ENCODE measurements at regions of chr5 and their contacts with region 1.

Region 1: DNA sequence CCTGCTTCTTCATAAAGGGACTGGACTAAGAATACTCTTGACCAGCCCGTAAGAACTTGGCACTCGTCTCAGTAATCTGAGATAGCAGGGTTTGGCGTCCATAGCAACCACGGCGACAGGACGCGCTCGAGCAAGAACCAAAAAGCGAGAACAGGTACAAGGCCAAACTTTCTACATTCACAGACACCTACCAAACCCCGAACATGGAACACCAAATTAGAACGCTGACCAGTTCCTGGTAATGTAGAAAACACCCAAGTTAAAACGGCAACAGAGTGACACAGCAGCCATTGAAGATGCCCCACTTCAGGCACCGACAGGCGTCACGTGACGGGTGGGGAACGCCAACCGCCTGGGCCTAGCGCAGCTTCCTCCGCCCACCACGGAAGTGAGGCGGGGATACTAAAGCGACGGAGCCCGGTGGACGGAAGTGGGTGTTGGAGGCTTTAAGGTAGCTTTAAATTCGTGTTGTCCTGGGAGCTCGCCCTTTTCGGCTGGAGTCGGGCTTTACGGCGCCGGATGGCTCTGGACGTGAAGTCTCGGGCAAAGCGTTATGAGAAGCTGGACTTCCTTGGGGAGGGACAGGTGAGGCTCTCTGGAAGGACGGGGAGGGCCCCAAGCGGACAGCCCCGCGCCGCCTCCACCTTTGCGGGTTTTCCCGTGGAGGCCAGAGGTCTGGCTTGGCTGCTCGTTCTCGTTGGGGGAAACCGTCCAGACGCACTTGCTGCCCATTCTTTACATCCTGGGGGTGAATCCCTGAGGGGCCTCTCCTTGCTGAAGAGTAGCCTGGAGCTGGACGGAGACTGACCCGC is at the start of gene CDK7:
- DNase-seq: peak; percentile 94 to 95
- ATAC-seq: peak; percentile 98 to 99
- H3K4me3 ChIP-seq: peak within 1 kb of the TSS; percentile 68 to 92 (median 76)
- H3K27ac ChIP-seq: peak within 1 kb of the TSS; percentile 75 to 94 (median 86)
- H3K4me1 ChIP-seq: peaks cover 21 to 25% of the 10 kb centered on the region in 2 donors
- H3K27me3 ChIP-seq: no peaks in the 10 kb centered on the region
- CTCF ChIP-seq: peak in 2 of 5 experiments; percentile 12
- POLR2A ChIP-seq: peak; percentile 57 to 58
- total RNA-seq, gene CDK7: 23.4 to 31.6 (median 28.0) TPM

Region 2: DNA sequence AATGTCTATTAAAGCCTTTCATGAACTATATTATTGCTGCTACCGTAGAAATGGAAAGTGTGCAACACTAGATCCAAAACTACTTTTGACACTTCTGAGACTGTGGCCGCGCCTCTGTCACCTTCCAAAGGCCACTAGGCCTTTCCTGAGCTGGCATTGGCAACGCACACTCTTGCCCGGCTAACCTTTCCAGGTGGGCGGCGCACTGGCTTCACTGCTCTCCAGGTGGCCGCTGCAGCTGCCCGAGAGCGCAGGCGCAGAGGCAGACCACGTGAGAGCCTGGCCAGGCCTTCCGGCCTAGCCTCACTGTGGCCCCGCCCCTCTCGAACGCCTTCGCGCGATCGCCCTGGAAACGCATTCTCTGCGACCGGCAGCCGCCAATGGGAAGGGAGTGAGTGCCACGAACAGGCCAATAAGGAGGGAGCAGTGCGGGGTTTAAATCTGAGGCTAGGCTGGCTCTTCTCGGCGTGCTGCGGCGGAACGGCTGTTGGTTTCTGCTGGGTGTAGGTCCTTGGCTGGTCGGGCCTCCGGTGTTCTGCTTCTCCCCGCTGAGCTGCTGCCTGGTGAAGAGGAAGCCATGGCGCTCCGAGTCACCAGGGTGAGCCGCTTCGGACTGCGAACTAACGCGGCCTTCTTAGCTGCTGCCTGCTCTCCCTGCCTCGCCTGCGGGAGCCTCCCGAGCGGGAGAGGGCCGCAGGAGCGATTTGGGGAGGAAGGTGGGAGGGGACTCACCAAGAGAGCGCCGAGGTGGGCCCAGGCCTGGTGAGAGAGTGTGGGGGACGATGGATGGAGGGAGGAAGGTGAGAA is 67.8 kb before region 1 on chr5 and contains the start of gene CCNB1:
- in situ Hi-C with region 1: no loop called
- intact Hi-C with region 1: loop called (anchors 1 kb)
- DNase-seq: peak; percentile 92 to 96
- ATAC-seq: peak; percentile 100
- H3K4me3 ChIP-seq: peak within 1 kb of the TSS; percentile 65 to 85 (median 74)
- H3K27ac ChIP-seq: peak within 1 kb of the TSS; percentile 31 to 53 (median 38)
- H3K4me1 ChIP-seq: peaks cover 7 to 8% of the 10 kb centered on the region in 2 donors
- H3K27me3 ChIP-seq: no peaks in the 10 kb centered on the region
- CTCF ChIP-seq: no peak
- POLR2A ChIP-seq: no peak
- total RNA-seq, gene CCNB1: 0.84 to 11.1 (median 2.7) TPM

Region 3: GRCh38 chr5:69189162-69190086 is 45.2 kb before region 1 on chr5 and contains the start of gene CENPH:
- in situ Hi-C with region 1: no loop called
- intact Hi-C with region 1: loop called (anchors 5 kb)
- DNase-seq: peak; percentile 59 to 77
- ATAC-seq: peak; percentile 98
- H3K4me3 ChIP-seq: peak within 1 kb of the TSS; percentile 69 to 87 (median 78)
- H3K27ac ChIP-seq: peak within 1 kb of the TSS; percentile 65 to 74 (median 68)
- H3K4me1 ChIP-seq: peaks cover 11 to 14% of the 10 kb centered on the region in 2 donors
- H3K27me3 ChIP-seq: no peaks in the 10 kb centered on the region
- CTCF ChIP-seq: no peak
- POLR2A ChIP-seq: no peak
- total RNA-seq, gene CENPH: 0.87 to 4.9 (median 1.8) TPM

Region 4: GRCh38 chr5:69217548-69218526 is 16.8 kb before region 1 on chr5:
- in situ Hi-C with region 1: no loop called
- intact Hi-C with region 1: loop called (anchors 1 kb)
- DNase-seq: peak; percentile 96 to 97
- ATAC-seq: peak; percentile 95 to 97
- H3K4me3 ChIP-seq: peak overlapping the region; percentile 95 to 100 (median 99)
- H3K27ac ChIP-seq: peak overlapping the region; percentile 93 to 100 (median 98)
- H3K4me1 ChIP-seq: peaks cover 10% of the 10 kb centered on the region in 2 donors
- H3K27me3 ChIP-seq: no peaks in the 10 kb centered on the region
- CTCF ChIP-seq: peak in 4 of 5 experiments; percentile 42 to 62 (median 51)
- POLR2A ChIP-seq: peak; percentile 92 to 95

Region 5: GRCh38 chr5:69334793-69335268 is 100.2 kb after region 1 on chr5:
- in situ Hi-C with region 1: loop called in 1 of 4 experiments (anchors 10 kb)
- intact Hi-C with region 1: loop called (anchors 2 kb)
- DNase-seq: peak; percentile 60 to 78
- ATAC-seq: peak; percentile 79 to 86
- H3K4me3 ChIP-seq: peak overlapping the region in 2 of 4 donors; percentile 15 to 16
- H3K27ac ChIP-seq: peak overlapping the region; percentile 14 to 68 (median 49)
- H3K4me1 ChIP-seq: peaks cover 8 to 15% of the 10 kb centered on the region in 2 donors
- H3K27me3 ChIP-seq: no peaks in the 10 kb centered on the region
- CTCF ChIP-seq: peak; percentile 46 to 82 (median 72)
- POLR2A ChIP-seq: no peak

Measured in gastrocnemius medialis (tissue), 4 donors.